MCF 10A (cell line): ENCODE measurements at regions of chr7 and their contacts with region 1.

Region 1: GRCh38 chr7:138738551-138739335 is 37.6 kb upstream of the SVOPL start:
- DNase-seq: peak; percentile 84
- H3K4me3 Mint-ChIP-seq: no peak overlapping the region
- H3K27ac Mint-ChIP-seq: peak overlapping the region; percentile 25
- H3K4me1 Mint-ChIP-seq: peaks cover 9% of the 10 kb centered on the region
- H3K27me3 Mint-ChIP-seq: no peaks in the 10 kb centered on the region
- CTCF ChIP-seq: peak; percentile 88

Region 2: GRCh38 chr7:138008547-138009349 is 730.0 kb before region 1 on chr7:
- CTCF ChIA-PET with region 1: interaction called, 3 read pairs
- POLR2A ChIA-PET with region 1: interaction called, 3 read pairs
- intact Hi-C with region 1: loop called (anchors 2 kb)
- DNase-seq: peak; percentile 78
- H3K4me3 Mint-ChIP-seq: no peak overlapping the region
- H3K27ac Mint-ChIP-seq: no peak overlapping the region
- H3K4me1 Mint-ChIP-seq: no peaks in the 10 kb centered on the region
- H3K27me3 Mint-ChIP-seq: no peaks in the 10 kb centered on the region
- CTCF ChIP-seq: peak; percentile 90

Region 3: GRCh38 chr7:138161600-138162081 is 577.1 kb before region 1 on chr7:
- CTCF ChIA-PET with region 1: interaction called, 72 read pairs
- POLR2A ChIA-PET with region 1: interaction called, 3 read pairs
- intact Hi-C with region 1: loop called (anchors 1 kb)
- DNase-seq: peak; percentile 95
- H3K4me3 Mint-ChIP-seq: no peak overlapping the region
- H3K27ac Mint-ChIP-seq: no peak overlapping the region
- H3K4me1 Mint-ChIP-seq: no peaks in the 10 kb centered on the region
- H3K27me3 Mint-ChIP-seq: no peaks in the 10 kb centered on the region
- CTCF ChIP-seq: peak; percentile 73

Region 4: GRCh38 chr7:138459413-138460175 is 279.1 kb before region 1 on chr7:
- CTCF ChIA-PET with region 1: interaction called, 3 read pairs
- POLR2A ChIA-PET with region 1: interaction called, 4 read pairs
- intact Hi-C with region 1: loop called (anchors 1 kb)
- DNase-seq: peak; percentile 97
- H3K4me3 Mint-ChIP-seq: peak overlapping the region; percentile 74
- H3K27ac Mint-ChIP-seq: peak overlapping the region; percentile 3
- H3K4me1 Mint-ChIP-seq: peaks cover 12% of the 10 kb centered on the region
- H3K27me3 Mint-ChIP-seq: no peaks in the 10 kb centered on the region
- CTCF ChIP-seq: peak; percentile 21

Region 5: GRCh38 chr7:138549082-138549481 is 189.7 kb before region 1 on chr7:
- CTCF ChIA-PET with region 1: no interaction called
- POLR2A ChIA-PET with region 1: no interaction called
- intact Hi-C with region 1: no loop called
- DNase-seq: peak; percentile 6
- H3K4me3 Mint-ChIP-seq: no peak overlapping the region
- H3K27ac Mint-ChIP-seq: no peak overlapping the region
- H3K4me1 Mint-ChIP-seq: no peaks in the 10 kb centered on the region
- H3K27me3 Mint-ChIP-seq: no peaks in the 10 kb centered on the region
- CTCF ChIP-seq: no peak

Region 6: GRCh38 chr7:138755327-138755747 is 16.6 kb after region 1 on chr7:
- CTCF ChIA-PET with region 1: interaction called, 16 read pairs
- POLR2A ChIA-PET with region 1: no interaction called
- intact Hi-C with region 1: no loop called
- DNase-seq: no peak
- H3K4me3 Mint-ChIP-seq: no peak overlapping the region
- H3K27ac Mint-ChIP-seq: no peak overlapping the region
- H3K4me1 Mint-ChIP-seq: peaks cover 13% of the 10 kb centered on the region
- H3K27me3 Mint-ChIP-seq: no peaks in the 10 kb centered on the region
- CTCF ChIP-seq: no peak

Region 7: GRCh38 chr7:138768241-138768640 is 29.5 kb after region 1 on chr7:
- CTCF ChIA-PET with region 1: no interaction called
- POLR2A ChIA-PET with region 1: no interaction called
- intact Hi-C with region 1: no loop called
- DNase-seq: no peak
- H3K4me3 Mint-ChIP-seq: no peak overlapping the region
- H3K27ac Mint-ChIP-seq: no peak overlapping the region
- H3K4me1 Mint-ChIP-seq: no peaks in the 10 kb centered on the region
- H3K27me3 Mint-ChIP-seq: no peaks in the 10 kb centered on the region
- CTCF ChIP-seq: no peak

Region 8: DNA sequence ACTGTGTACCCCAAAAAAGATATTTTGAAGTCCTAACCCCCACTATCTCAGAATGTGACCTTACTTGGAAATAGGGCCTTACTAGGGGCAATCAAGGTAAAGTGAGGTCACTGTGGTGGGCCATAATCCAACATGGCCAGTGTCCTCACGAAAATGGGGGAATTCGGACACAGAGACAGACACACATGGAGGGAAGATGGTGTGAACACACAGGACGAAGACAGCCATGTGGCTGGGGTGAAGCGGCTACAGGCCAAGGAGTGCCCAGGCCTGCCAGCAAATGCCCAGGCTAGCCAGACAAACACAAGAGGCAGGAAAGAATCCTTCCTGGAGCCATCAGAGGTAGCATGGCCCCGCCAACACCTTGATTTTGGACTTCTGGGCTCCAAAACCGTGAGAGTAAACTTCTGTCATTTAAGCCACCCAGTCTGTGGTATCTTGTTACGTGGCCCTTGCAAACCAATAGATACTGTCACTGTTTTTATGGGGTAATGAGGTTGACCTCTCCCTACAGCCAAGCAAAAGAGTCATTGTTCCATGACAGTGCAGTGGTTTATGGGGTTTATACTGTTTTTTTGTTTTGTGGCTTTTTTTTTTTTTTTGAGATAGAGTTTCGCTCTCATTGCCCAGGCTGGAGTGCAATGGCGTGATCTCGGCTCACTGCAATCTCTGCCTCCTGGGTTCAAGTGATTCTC is 209.5 kb after region 1 on chr7:
- CTCF ChIA-PET with region 1: no interaction called
- POLR2A ChIA-PET with region 1: no interaction called
- intact Hi-C with region 1: no loop called
- DNase-seq: no peak
- H3K4me3 Mint-ChIP-seq: no peak overlapping the region
- H3K27ac Mint-ChIP-seq: no peak overlapping the region
- H3K4me1 Mint-ChIP-seq: peaks cover 16% of the 10 kb centered on the region
- H3K27me3 Mint-ChIP-seq: no peaks in the 10 kb centered on the region
- CTCF ChIP-seq: no peak